ENCODE measurements at regions of chr13 and their contacts with region 1.

Region 1: GRCh38 chr13:32586080-32586900 is at the start of gene PDS5B:
- DNase-seq: peak; percentile 95 to 99 (median 97)
- ATAC-seq: peak; percentile 97
- H3K4me3 ChIP-seq: peak within 1 kb of the TSS; percentile 89
- H3K4me3 Mint-ChIP-seq: peak within 1 kb of the TSS; percentile 90 to 99 (median 97)
- H3K27ac ChIP-seq: peak within 1 kb of the TSS; percentile 79
- H3K27ac Mint-ChIP-seq: peak within 1 kb of the TSS; percentile 95 to 98 (median 96)
- H3K4me1 ChIP-seq: peaks cover 13 to 15% of the 10 kb centered on the region in 2 donors
- H3K4me1 Mint-ChIP-seq: peaks cover 32 to 49% (median 43%) of the 10 kb centered on the region in 7 donors
- H3K27me3 ChIP-seq: no peaks in the 10 kb centered on the region
- H3K27me3 Mint-ChIP-seq: peaks cover 0 to 20% (median 0%) of the 10 kb centered on the region in 5 donors
- total RNA-seq, gene PDS5B: 43.3 to 68.0 (median 52.1) TPM

Region 2: GRCh38 chr13:31199849-31200636 is 1386.2 kb before region 1 on chr13 and contains the start of gene B3GLCT:
- CTCF ChIA-PET with region 1: no interaction called
- POLR2A ChIA-PET with region 1: no interaction called
- intact Hi-C with region 1: loop called in 1 of 2 experiments (anchors 10 kb)
- DNase-seq: peak; percentile 70 to 90 (median 86)
- ATAC-seq: peak; percentile 88
- H3K4me3 ChIP-seq: peak within 1 kb of the TSS; percentile 65
- H3K4me3 Mint-ChIP-seq: peak within 1 kb of the TSS; percentile 83 to 92 (median 89)
- H3K27ac ChIP-seq: peak within 1 kb of the TSS; percentile 82
- H3K27ac Mint-ChIP-seq: peak within 1 kb of the TSS; percentile 78 to 94 (median 92)
- H3K4me1 ChIP-seq: peaks cover 5 to 6% of the 10 kb centered on the region in 2 donors
- H3K4me1 Mint-ChIP-seq: peaks cover 13 to 28% (median 23%) of the 10 kb centered on the region in 7 donors
- H3K27me3 ChIP-seq: no peaks in the 10 kb centered on the region
- H3K27me3 Mint-ChIP-seq: peaks cover 0 to 19% (median 0%) of the 10 kb centered on the region in 5 donors
- total RNA-seq, gene B3GLCT: 3.7 to 4.6 (median 4.4) TPM

Region 3: DNA sequence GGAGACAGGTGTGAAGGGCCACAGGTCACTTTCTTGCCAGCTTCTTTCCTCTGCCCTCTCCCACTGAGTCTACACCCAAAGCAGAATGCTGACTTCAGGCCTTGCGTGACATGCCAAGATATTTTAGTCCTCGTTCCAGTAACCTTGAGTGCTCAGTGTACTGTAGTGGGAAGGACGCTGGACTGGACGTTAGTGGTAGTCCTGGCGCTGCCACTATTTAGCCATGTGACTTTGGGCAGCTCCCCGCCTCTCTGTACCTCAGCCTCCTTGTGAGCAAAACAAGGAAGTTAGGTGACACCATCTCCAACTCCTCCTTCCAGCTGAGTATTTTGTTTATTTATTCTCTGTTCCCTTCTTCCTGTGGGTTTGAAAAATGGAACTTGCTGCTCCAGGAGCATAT is 468.6 kb before region 1 on chr13:
- CTCF ChIA-PET with region 1: no interaction called
- POLR2A ChIA-PET with region 1: no interaction called
- intact Hi-C with region 1: no loop called
- DNase-seq: no peak
- ATAC-seq: no peak
- H3K4me3 ChIP-seq: no peak overlapping the region
- H3K4me3 Mint-ChIP-seq: no peak overlapping the region
- H3K27ac ChIP-seq: no peak overlapping the region
- H3K27ac Mint-ChIP-seq: peak overlapping the region in 1 of 9 donors; percentile 62
- H3K4me1 ChIP-seq: peaks cover 0 to 3% of the 10 kb centered on the region in 2 donors
- H3K4me1 Mint-ChIP-seq: peaks cover 0 to 28% (median 23%) of the 10 kb centered on the region in 7 donors
- H3K27me3 ChIP-seq: no peaks in the 10 kb centered on the region
- H3K27me3 Mint-ChIP-seq: peaks cover 0 to 9% (median 0%) of the 10 kb centered on the region in 5 donors

Region 4: DNA sequence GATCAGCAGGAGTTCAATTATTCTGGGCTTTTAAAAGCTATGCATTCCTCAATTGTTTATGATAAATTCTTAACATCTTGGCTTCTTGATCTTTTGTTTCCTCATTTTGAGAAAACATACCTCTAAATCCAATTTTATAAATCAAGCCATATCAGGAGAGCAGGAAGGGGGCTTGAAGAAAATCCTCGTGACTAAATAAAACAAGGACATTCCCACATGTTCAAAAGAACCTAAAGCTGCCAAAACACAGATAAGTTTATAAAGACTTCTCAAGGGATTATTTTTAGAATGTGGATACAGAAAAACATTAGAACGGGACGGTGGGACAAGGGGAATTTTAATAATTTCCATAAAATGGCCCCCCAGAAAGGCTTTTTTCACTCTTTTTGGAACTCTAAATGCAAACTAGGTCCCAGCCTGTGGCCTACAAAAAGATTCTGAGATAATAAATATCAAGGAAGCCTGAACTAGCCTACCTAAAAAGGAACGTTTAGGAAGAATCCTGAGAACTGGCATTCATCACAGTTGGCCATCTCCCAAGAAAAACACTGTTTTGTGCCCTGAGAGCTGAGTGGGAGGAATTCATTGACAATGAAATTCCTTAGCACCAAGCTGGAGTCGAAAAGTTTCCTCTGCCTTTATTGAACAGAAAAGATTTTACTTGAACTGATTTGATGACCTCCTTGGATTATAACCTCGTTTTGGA is 301.2 kb before region 1 on chr13:
- CTCF ChIA-PET with region 1: no interaction called
- POLR2A ChIA-PET with region 1: no interaction called
- intact Hi-C with region 1: no loop called
- DNase-seq: no peak
- ATAC-seq: no peak
- H3K4me3 ChIP-seq: no peak overlapping the region
- H3K4me3 Mint-ChIP-seq: no peak overlapping the region
- H3K27ac ChIP-seq: no peak overlapping the region
- H3K27ac Mint-ChIP-seq: no peak overlapping the region
- H3K4me1 ChIP-seq: no peaks in the 10 kb centered on the region
- H3K4me1 Mint-ChIP-seq: peaks cover 0 to 2% (median 0%) of the 10 kb centered on the region in 7 donors
- H3K27me3 ChIP-seq: no peaks in the 10 kb centered on the region
- H3K27me3 Mint-ChIP-seq: no peaks in the 10 kb centered on the region

Region 5: DNA sequence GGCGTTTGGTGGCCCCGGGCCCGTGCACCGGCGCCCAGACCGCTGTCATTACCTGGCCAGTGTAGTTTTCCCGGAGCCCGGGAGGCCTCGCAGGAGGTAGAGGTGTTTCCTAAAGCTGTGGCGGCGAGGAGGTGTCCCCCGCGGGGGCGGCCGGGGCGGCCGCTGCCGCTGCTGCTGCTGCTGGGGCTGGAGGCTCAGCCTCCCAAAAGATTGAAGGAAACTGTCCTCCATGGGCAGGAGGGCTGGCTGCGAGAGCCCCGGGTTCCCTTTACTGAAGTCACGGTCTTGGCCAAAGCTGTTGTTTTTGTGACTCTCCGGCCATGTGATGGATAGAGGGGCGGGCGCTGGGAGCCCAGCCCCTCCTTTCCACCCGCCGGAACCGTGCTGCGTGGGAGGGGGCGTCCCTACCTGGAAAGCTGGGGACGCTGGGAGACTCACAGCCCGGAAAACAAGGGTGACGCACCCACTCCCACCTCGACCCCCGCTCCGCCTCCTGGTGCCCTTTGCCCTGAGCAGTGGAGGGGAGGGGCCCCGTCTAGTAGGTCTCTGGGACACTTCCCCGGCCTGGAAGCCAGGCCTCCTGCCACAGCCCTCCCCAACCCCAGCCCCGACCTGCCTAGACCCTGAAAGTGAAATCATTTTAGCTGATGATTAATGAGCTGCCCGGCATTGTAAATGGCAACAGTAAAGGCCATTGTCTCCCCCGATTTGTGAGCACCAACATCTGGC is 158.3 kb before region 1 on chr13 and contains the start of gene N4BP2L1:
- CTCF ChIA-PET with region 1: interaction called, 3 read pairs
- POLR2A ChIA-PET with region 1: interaction called, 4 read pairs
- intact Hi-C with region 1: loop called (anchors 1 kb)
- DNase-seq: peak; percentile 60 to 91 (median 78)
- ATAC-seq: peak; percentile 81
- H3K4me3 ChIP-seq: peak within 1 kb of the TSS; percentile 64
- H3K4me3 Mint-ChIP-seq: peak within 1 kb of the TSS; percentile 90 to 100 (median 94)
- H3K27ac ChIP-seq: peak within 1 kb of the TSS; percentile 98
- H3K27ac Mint-ChIP-seq: peak within 1 kb of the TSS; percentile 95 to 99 (median 97)
- H3K4me1 ChIP-seq: peaks cover 19 to 20% of the 10 kb centered on the region in 2 donors
- H3K4me1 Mint-ChIP-seq: peaks cover 34 to 50% (median 48%) of the 10 kb centered on the region in 7 donors
- H3K27me3 ChIP-seq: no peaks in the 10 kb centered on the region
- H3K27me3 Mint-ChIP-seq: no peaks in the 10 kb centered on the region
- total RNA-seq, gene N4BP2L1: 30.4 to 58.0 (median 47.1) TPM

Region 6: GRCh38 chr13:32650705-32651311 is 64.5 kb after region 1 on chr13:
- CTCF ChIA-PET with region 1: interaction called, 14 read pairs
- POLR2A ChIA-PET with region 1: interaction called, 6 read pairs
- intact Hi-C with region 1: loop called (anchors 1 kb)
- DNase-seq: peak in 8 of 9 donors; percentile 16 to 55 (median 41)
- ATAC-seq: peak; percentile 91
- H3K4me3 ChIP-seq: no peak overlapping the region
- H3K4me3 Mint-ChIP-seq: no peak overlapping the region
- H3K27ac ChIP-seq: no peak overlapping the region
- H3K27ac Mint-ChIP-seq: peak overlapping the region in 1 of 9 donors; percentile 21
- H3K4me1 ChIP-seq: peaks cover 0 to 10% of the 10 kb centered on the region in 2 donors
- H3K4me1 Mint-ChIP-seq: peaks cover 23 to 55% (median 40%) of the 10 kb centered on the region in 7 donors
- H3K27me3 ChIP-seq: no peaks in the 10 kb centered on the region
- H3K27me3 Mint-ChIP-seq: no peaks in the 10 kb centered on the region

Region 7: DNA sequence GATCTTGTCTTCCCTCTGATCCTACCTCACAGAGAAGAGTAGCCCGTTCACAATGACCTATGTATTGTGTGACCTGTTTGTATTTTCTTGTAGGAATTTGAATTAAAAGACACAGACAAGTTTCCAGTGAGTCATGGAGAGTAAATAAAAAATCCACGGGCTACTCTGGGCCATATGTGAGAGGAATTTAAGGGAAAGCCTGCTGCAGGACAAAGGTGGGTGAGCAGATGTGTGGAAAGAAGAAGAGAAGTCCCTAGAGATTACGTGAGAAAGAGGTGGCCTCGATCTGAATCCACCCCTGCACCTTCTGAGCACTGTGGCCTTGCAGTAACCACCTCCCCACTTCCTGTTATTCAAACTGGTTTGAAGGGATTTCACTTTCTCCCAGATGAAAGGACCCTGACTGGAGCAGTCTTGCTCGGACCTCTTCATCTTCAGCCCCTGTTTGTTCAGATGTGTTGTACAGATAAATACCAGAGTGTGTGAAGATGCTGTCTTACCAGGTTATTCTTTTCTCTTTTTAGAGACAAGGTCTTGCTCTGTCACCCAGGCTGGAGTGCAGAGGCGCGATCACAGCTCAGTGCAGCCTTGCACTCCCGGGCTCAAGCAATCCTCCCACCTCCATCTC is 205.4 kb after region 1 on chr13:
- CTCF ChIA-PET with region 1: no interaction called
- POLR2A ChIA-PET with region 1: no interaction called
- intact Hi-C with region 1: loop called in 1 of 2 experiments (anchors 5 kb)
- DNase-seq: peak in 7 of 9 donors; percentile 35 to 61 (median 47)
- ATAC-seq: peak; percentile 82
- H3K4me3 ChIP-seq: no peak overlapping the region
- H3K4me3 Mint-ChIP-seq: peak overlapping the region; percentile 14 to 75 (median 59)
- H3K27ac ChIP-seq: peak overlapping the region; percentile 55
- H3K27ac Mint-ChIP-seq: peak overlapping the region; percentile 77 to 96 (median 90)
- H3K4me1 ChIP-seq: peaks cover 0 to 28% of the 10 kb centered on the region in 2 donors
- H3K4me1 Mint-ChIP-seq: peaks cover 25 to 64% (median 50%) of the 10 kb centered on the region in 7 donors
- H3K27me3 ChIP-seq: no peaks in the 10 kb centered on the region
- H3K27me3 Mint-ChIP-seq: no peaks in the 10 kb centered on the region

Region 8: DNA sequence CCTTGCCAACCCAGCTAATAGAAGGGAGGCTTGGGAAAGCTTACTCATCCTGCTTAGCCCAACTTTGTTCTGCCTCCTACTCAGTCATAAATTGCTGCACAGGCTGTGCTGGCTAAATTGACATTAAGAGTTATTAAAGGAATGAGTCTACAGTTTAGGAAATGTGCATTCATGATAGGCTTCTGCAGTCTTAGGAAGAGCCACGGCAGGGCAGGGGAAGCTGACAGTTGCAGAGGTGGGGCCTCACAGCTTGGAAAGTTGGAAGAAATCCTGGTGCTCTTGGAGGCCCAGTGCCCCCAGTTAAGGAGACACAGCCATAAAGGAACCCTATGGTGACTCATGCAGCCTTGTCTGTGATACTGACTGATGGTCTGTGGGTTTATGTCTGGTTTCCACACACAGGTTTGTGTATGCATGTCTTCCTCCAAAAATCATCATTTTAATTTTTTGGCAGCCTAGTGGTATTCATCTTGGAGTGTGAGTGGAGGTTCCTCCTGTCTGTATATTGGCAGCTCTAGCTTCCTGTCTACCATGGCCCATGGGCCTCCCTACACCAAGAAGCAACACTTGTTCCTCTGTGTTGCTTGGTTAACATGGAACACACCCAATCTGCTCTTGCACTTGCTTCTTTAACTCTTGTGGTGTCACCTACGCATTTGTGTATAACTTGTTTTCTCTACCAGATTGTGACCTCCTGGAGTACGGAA is 294.9 kb after region 1 on chr13:
- CTCF ChIA-PET with region 1: no interaction called
- POLR2A ChIA-PET with region 1: no interaction called
- intact Hi-C with region 1: no loop called
- DNase-seq: no peak
- ATAC-seq: no peak
- H3K4me3 ChIP-seq: no peak overlapping the region
- H3K4me3 Mint-ChIP-seq: no peak overlapping the region
- H3K27ac ChIP-seq: no peak overlapping the region
- H3K27ac Mint-ChIP-seq: no peak overlapping the region
- H3K4me1 ChIP-seq: no peaks in the 10 kb centered on the region
- H3K4me1 Mint-ChIP-seq: peaks cover 0 to 7% (median 0%) of the 10 kb centered on the region in 7 donors
- H3K27me3 ChIP-seq: no peaks in the 10 kb centered on the region
- H3K27me3 Mint-ChIP-seq: peaks cover 0 to 4% (median 0%) of the 10 kb centered on the region in 5 donors

Region 9: GRCh38 chr13:33204130-33204927 is 618.0 kb after region 1 on chr13:
- CTCF ChIA-PET with region 1: no interaction called
- POLR2A ChIA-PET with region 1: no interaction called
- intact Hi-C with region 1: loop called in 1 of 2 experiments (anchors 10 kb)
- DNase-seq: no peak
- ATAC-seq: no peak
- H3K4me3 ChIP-seq: no peak overlapping the region
- H3K4me3 Mint-ChIP-seq: peak overlapping the region in 2 of 10 donors; percentile 11 to 73
- H3K27ac ChIP-seq: no peak overlapping the region
- H3K27ac Mint-ChIP-seq: peak overlapping the region in 1 of 9 donors; percentile 75
- H3K4me1 ChIP-seq: no peaks in the 10 kb centered on the region
- H3K4me1 Mint-ChIP-seq: peaks cover 8 to 59% (median 16%) of the 10 kb centered on the region in 7 donors
- H3K27me3 ChIP-seq: no peaks in the 10 kb centered on the region
- H3K27me3 Mint-ChIP-seq: peaks cover 0 to 31% (median 26%) of the 10 kb centered on the region in 5 donors

Region 10: GRCh38 chr13:33524086-33524485 is 937.8 kb after region 1 on chr13:
- CTCF ChIA-PET with region 1: no interaction called
- POLR2A ChIA-PET with region 1: no interaction called
- intact Hi-C with region 1: no loop called
- DNase-seq: no peak
- ATAC-seq: no peak
- H3K4me3 ChIP-seq: no peak overlapping the region
- H3K4me3 Mint-ChIP-seq: no peak overlapping the region
- H3K27ac ChIP-seq: no peak overlapping the region
- H3K27ac Mint-ChIP-seq: no peak overlapping the region
- H3K4me1 ChIP-seq: peaks cover 5% of the 10 kb centered on the region in 2 donors
- H3K4me1 Mint-ChIP-seq: peaks cover 0 to 12% (median 9%) of the 10 kb centered on the region in 7 donors
- H3K27me3 ChIP-seq: no peaks in the 10 kb centered on the region
- H3K27me3 Mint-ChIP-seq: peaks cover 0 to 3% (median 0%) of the 10 kb centered on the region in 5 donors

Region 11: GRCh38 chr13:33817901-33818706 is 1231.8 kb after region 1 on chr13 and contains the start of gene RFC3:
- CTCF ChIA-PET with region 1: no interaction called
- POLR2A ChIA-PET with region 1: no interaction called
- intact Hi-C with region 1: loop called (anchors 1 to 5 kb)
- DNase-seq: peak; percentile 78 to 89 (median 87)
- ATAC-seq: peak; percentile 95
- H3K4me3 ChIP-seq: peak within 1 kb of the TSS; percentile 84
- H3K4me3 Mint-ChIP-seq: peak within 1 kb of the TSS; percentile 86 to 100 (median 96)
- H3K27ac ChIP-seq: peak within 1 kb of the TSS; percentile 70
- H3K27ac Mint-ChIP-seq: peak within 1 kb of the TSS; percentile 89 to 98 (median 95)
- H3K4me1 ChIP-seq: peaks cover 0 to 8% of the 10 kb centered on the region in 2 donors
- H3K4me1 Mint-ChIP-seq: peaks cover 14 to 44% (median 25%) of the 10 kb centered on the region in 7 donors
- H3K27me3 ChIP-seq: no peaks in the 10 kb centered on the region
- H3K27me3 Mint-ChIP-seq: peaks cover 0 to 7% (median 0%) of the 10 kb centered on the region in 5 donors
- total RNA-seq, gene RFC3: 4.5 to 29.9 (median 7.1) TPM

Measured in naive thymus-derived CD4-positive, alpha-beta T cell (primary cell).